T-cell (primary cell): ENCODE measurements at regions of chr17 and their contacts with region 1.

Region 1: DNA sequence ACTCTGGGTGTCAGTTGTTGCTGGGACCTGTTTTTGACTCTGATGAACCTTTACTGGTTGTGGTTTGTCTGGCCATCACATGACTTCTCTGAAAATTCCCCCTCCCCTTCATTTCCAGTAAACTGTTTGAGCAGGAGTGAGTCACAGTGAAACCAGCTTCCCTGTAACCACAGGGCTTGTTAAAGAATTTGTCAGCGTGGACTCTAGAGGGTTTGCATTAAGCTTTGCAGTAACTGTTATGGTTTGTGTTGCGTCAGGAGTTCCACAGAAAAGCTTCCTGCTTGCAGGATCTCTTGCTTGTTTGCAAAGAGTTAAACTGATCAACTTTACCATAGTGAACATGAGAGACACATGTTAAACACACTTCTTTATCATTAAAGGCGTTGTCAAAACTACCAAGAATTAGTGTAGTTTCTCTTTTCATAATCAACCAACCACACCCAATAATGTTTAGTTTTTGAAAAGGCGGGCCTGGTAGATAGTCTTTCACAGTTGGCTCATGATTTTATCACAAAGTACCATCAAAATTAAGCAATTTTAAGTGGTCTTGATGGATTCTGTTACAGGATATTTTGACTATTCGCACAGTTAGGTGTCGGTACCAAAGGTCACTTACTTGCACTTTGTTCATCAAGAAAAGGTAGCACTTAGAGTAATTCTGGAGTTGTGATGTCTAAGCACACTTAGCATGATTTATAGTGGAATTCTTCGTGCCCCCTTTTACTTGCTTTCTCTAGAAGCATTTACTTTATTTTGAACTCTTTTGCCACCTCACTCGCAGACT is 79.3 kb downstream of the VMP1 start:
- DNase-seq: peak; percentile 18 to 94 (median 69)
- ATAC-seq: peak; percentile 90 to 92 (median 90)
- H3K4me3 ChIP-seq: peak overlapping the region in 1 of 2 donors; percentile 37
- H3K4me3 Mint-ChIP-seq: peak overlapping the region; percentile 67 to 77 (median 75)
- H3K27ac ChIP-seq: peak overlapping the region; percentile 89
- H3K27ac Mint-ChIP-seq: peak overlapping the region; percentile 100
- H3K4me1 ChIP-seq: peaks cover 22 to 31% of the 10 kb centered on the region in 2 experiments
- H3K4me1 Mint-ChIP-seq: peaks cover 51 to 62% (median 61%) of the 10 kb centered on the region in 3 donors
- H3K27me3 ChIP-seq: no peaks in the 10 kb centered on the region
- H3K27me3 Mint-ChIP-seq: no peaks in the 10 kb centered on the region

Region 2: DNA sequence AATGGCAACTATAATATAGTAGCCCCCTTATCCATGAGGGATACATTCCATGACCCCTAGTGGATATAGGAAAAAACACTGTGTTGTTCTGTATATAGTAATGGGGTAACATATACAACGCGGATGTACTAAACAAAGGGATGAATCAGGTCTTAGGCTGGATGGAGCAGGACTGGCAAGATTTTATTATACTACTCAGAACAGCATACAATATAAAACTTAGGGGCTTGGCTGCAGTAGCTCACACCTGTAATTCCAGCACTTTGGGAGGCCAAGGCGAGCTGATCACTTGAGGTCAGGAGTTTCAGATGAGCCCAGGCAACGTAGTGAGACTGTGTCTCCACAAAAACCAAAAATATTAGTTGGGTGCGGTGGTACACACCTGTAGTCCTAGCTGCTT is 52.5 kb before region 1 on chr17:
- CTCF ChIA-PET with region 1: no interaction called
- POLR2A ChIA-PET with region 1: no interaction called
- DNase-seq: no peak
- ATAC-seq: no peak
- H3K4me3 ChIP-seq: no peak overlapping the region
- H3K4me3 Mint-ChIP-seq: no peak overlapping the region
- H3K27ac ChIP-seq: no peak overlapping the region
- H3K27ac Mint-ChIP-seq: no peak overlapping the region
- H3K4me1 ChIP-seq: peaks cover 0 to 2% of the 10 kb centered on the region in 2 experiments
- H3K4me1 Mint-ChIP-seq: peaks cover 9 to 13% (median 12%) of the 10 kb centered on the region in 3 donors
- H3K27me3 ChIP-seq: no peaks in the 10 kb centered on the region
- H3K27me3 Mint-ChIP-seq: no peaks in the 10 kb centered on the region

Region 3: DNA sequence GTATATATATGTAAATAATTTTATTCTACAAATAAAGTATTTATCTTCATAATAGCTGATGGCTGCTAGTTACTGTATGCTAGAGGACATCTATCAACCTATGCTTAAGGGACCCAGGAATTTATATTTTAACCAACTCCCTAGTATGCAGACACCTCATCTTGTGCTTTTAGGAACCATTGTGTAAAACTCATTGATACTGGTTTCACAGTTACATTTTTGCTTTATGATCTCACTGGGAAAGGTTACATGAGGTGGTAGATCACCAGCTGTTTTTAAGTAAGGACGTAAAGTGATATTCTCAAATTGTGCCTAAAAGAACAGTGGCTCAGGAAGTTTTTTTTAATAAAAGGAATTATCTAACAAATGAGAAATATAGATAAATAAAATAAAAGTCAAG is 22.9 kb before region 1 on chr17:
- CTCF ChIA-PET with region 1: interaction called in 1 of 2 experiments, 4 read pairs
- POLR2A ChIA-PET with region 1: interaction called in 1 of 2 experiments, 14 read pairs
- DNase-seq: no peak
- ATAC-seq: no peak
- H3K4me3 ChIP-seq: no peak overlapping the region
- H3K4me3 Mint-ChIP-seq: no peak overlapping the region
- H3K27ac ChIP-seq: no peak overlapping the region
- H3K27ac Mint-ChIP-seq: no peak overlapping the region
- H3K4me1 ChIP-seq: no peaks in the 10 kb centered on the region
- H3K4me1 Mint-ChIP-seq: peaks cover 19 to 26% (median 25%) of the 10 kb centered on the region in 3 donors
- H3K27me3 ChIP-seq: no peaks in the 10 kb centered on the region
- H3K27me3 Mint-ChIP-seq: no peaks in the 10 kb centered on the region

Region 4: DNA sequence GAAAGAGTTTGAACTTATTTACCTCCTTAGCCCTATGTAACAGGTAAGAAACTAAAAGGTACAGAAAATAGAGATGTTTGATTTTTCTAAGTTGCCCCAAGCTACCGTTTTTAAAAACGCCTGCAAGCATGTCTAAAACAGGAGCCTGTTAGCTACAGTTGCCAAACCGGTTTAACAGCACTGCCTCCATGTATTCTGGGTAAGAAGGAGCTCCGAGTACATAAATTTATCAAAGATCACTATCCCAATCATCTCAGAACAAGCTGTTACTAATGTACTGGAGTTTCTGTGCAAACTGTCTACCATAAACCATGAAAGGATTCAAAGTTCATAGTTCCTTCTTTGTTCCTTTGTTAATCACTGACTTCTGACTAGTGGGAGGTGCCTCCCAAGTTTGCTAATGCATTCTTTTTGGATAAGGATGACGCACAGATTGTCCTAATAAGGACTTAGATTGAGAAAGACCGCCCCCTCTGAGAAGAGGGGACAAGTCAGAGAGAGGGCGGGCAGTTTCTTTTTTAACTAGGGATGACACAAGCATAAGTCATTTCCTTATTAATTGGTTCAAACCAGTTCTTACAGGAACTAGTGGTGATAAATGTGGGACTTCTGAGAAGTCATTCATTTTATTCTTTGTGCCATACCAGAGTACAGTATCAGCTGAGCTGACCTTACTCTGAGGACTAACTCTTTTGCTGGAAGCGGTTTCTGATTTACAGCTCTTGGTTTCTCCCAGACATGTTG is 50.8 kb after region 1 on chr17:
- CTCF ChIA-PET with region 1: interaction called, 5 to 13 read pairs
- POLR2A ChIA-PET with region 1: interaction called in 1 of 2 experiments, 28 read pairs
- DNase-seq: peak in 31 of 35 experiments; percentile 14 to 90 (median 61)
- ATAC-seq: peak; percentile 87 to 93 (median 92)
- H3K4me3 ChIP-seq: peak overlapping the region in 1 of 2 donors; percentile 69
- H3K4me3 Mint-ChIP-seq: peak overlapping the region; percentile 98 to 100 (median 99)
- H3K27ac ChIP-seq: peak overlapping the region; percentile 87
- H3K27ac Mint-ChIP-seq: peak overlapping the region; percentile 99 to 100
- H3K4me1 ChIP-seq: peaks cover 0 to 16% of the 10 kb centered on the region in 2 experiments
- H3K4me1 Mint-ChIP-seq: peaks cover 56 to 58% (median 57%) of the 10 kb centered on the region in 3 donors
- H3K27me3 ChIP-seq: no peaks in the 10 kb centered on the region
- H3K27me3 Mint-ChIP-seq: no peaks in the 10 kb centered on the region

Region 5: GRCh38 chr17:59859444-59860025 is 72.8 kb after region 1 on chr17:
- CTCF ChIA-PET with region 1: interaction called, 3 to 15 read pairs
- POLR2A ChIA-PET with region 1: interaction called, 3 read pairs
- DNase-seq: peak in 2 of 35 experiments; percentile 5 to 66
- ATAC-seq: peak; percentile 51 to 64 (median 58)
- H3K4me3 ChIP-seq: no peak overlapping the region
- H3K4me3 Mint-ChIP-seq: no peak overlapping the region
- H3K27ac ChIP-seq: no peak overlapping the region
- H3K27ac Mint-ChIP-seq: peak overlapping the region; percentile 61 to 75
- H3K4me1 ChIP-seq: no peaks in the 10 kb centered on the region
- H3K4me1 Mint-ChIP-seq: peaks cover 0 to 18% (median 6%) of the 10 kb centered on the region in 3 donors
- H3K27me3 ChIP-seq: no peaks in the 10 kb centered on the region
- H3K27me3 Mint-ChIP-seq: no peaks in the 10 kb centered on the region